Caco-2 (cell line): ENCODE measurements at regions of chr4 and their contacts with region 1.

Region 1: GRCh38 chr4:42568610-42569207 is 88.2 kb downstream of the ATP8A1 start:
- DNase-seq: peak; percentile 64 to 68
- H3K4me3 ChIP-seq: no peak overlapping the region
- H3K4me3 Mint-ChIP-seq: no peak overlapping the region
- H3K27ac Mint-ChIP-seq: no peak overlapping the region
- H3K4me1 ChIP-seq: no peaks in the 10 kb centered on the region; the same call in 1 of the 2 replicates
- H3K4me1 Mint-ChIP-seq: no peaks in the 10 kb centered on the region
- H3K27me3 ChIP-seq: no peaks in the 10 kb centered on the region
- H3K27me3 Mint-ChIP-seq: no peaks in the 10 kb centered on the region
- CTCF ChIP-seq: peak; percentile 65 to 67

Region 2: DNA sequence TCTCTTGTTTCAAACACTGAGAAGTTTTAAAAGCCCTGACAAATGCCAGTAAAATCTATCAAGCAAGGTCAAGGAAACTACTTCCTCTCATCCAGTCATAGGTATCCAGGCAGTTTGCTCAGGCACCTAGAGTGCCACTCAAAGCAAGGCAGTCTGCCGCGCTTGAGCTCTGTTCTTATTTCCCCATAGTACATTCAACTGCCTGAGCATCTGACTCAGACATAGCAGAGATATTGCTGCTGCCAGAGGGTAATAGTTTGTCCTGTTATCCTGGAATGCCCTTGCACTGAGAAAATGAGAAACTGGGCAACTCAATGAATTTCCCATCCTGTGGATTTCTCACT is 104.3 kb after region 1 on chr4:
- CTCF ChIA-PET with region 1: no interaction called
- POLR2A ChIA-PET with region 1: no interaction called
- intact Hi-C with region 1: loop called (anchors 5 kb)
- DNase-seq: no peak
- H3K4me3 ChIP-seq: no peak overlapping the region
- H3K4me3 Mint-ChIP-seq: no peak overlapping the region
- H3K27ac Mint-ChIP-seq: no peak overlapping the region
- H3K4me1 ChIP-seq: no peaks in the 10 kb centered on the region
- H3K4me1 Mint-ChIP-seq: no peaks in the 10 kb centered on the region
- H3K27me3 ChIP-seq: no peaks in the 10 kb centered on the region
- H3K27me3 Mint-ChIP-seq: peaks cover 18% of the 10 kb centered on the region
- CTCF ChIP-seq: no peak

Region 3: GRCh38 chr4:42768125-42768748 is 199.5 kb after region 1 on chr4:
- CTCF ChIA-PET with region 1: interaction called, 13 read pairs
- POLR2A ChIA-PET with region 1: no interaction called
- intact Hi-C with region 1: loop called (anchors 1 kb)
- DNase-seq: no peak
- H3K4me3 ChIP-seq: no peak overlapping the region
- H3K4me3 Mint-ChIP-seq: no peak overlapping the region
- H3K27ac Mint-ChIP-seq: no peak overlapping the region
- H3K4me1 ChIP-seq: no peaks in the 10 kb centered on the region
- H3K4me1 Mint-ChIP-seq: no peaks in the 10 kb centered on the region
- H3K27me3 ChIP-seq: no peaks in the 10 kb centered on the region
- H3K27me3 Mint-ChIP-seq: peaks cover 3% of the 10 kb centered on the region
- CTCF ChIP-seq: no peak

Region 4: GRCh38 chr4:42824278-42824970 is 255.7 kb after region 1 on chr4:
- CTCF ChIA-PET with region 1: no interaction called
- POLR2A ChIA-PET with region 1: no interaction called
- intact Hi-C with region 1: loop called (anchors 2 kb)
- DNase-seq: peak in 1 of 2 experiments; percentile 29
- H3K4me3 ChIP-seq: no peak overlapping the region
- H3K4me3 Mint-ChIP-seq: no peak overlapping the region
- H3K27ac Mint-ChIP-seq: no peak overlapping the region
- H3K4me1 ChIP-seq: no peaks in the 10 kb centered on the region; the same call in 1 of the 2 replicates
- H3K4me1 Mint-ChIP-seq: peaks cover 6% of the 10 kb centered on the region
- H3K27me3 ChIP-seq: no peaks in the 10 kb centered on the region
- H3K27me3 Mint-ChIP-seq: peaks cover 12% of the 10 kb centered on the region
- CTCF ChIP-seq: no peak

Region 5: GRCh38 chr4:42965326-42965725 is 396.6 kb after region 1 on chr4:
- CTCF ChIA-PET with region 1: interaction called, 5 read pairs
- POLR2A ChIA-PET with region 1: no interaction called
- intact Hi-C with region 1: loop called (anchors 2 kb)
- DNase-seq: no peak
- H3K4me3 ChIP-seq: no peak overlapping the region
- H3K4me3 Mint-ChIP-seq: no peak overlapping the region
- H3K27ac Mint-ChIP-seq: no peak overlapping the region
- H3K4me1 ChIP-seq: no peaks in the 10 kb centered on the region
- H3K4me1 Mint-ChIP-seq: no peaks in the 10 kb centered on the region
- H3K27me3 ChIP-seq: no peaks in the 10 kb centered on the region
- H3K27me3 Mint-ChIP-seq: no peaks in the 10 kb centered on the region
- CTCF ChIP-seq: no peak